Activated CD4-positive, alpha-beta memory T cell treated with anti-CD3 and anti-CD28 coated beads for 36 hours (primary cell): ENCODE measurements at regions of chr17 and their contacts with region 1.

Region 1: GRCh38 chr17:64506576-64507477 is at the start of gene CEP95:
- DNase-seq: peak; percentile 96
- H3K4me3 Mint-ChIP-seq: peak within 1 kb of the TSS; percentile 97
- H3K27ac Mint-ChIP-seq: peak within 1 kb of the TSS; percentile 100
- H3K4me1 Mint-ChIP-seq: peaks cover 48% of the 10 kb centered on the region
- H3K27me3 Mint-ChIP-seq: peaks cover 2% of the 10 kb centered on the region
- total RNA-seq, gene CEP95: 29.9 to 37.8 TPM

Region 2: GRCh38 chr17:63697341-63698286 is 809.2 kb before region 1 on chr17:
- CTCF ChIA-PET with region 1: no interaction called
- POLR2A ChIA-PET with region 1: no interaction called
- intact Hi-C with region 1: loop called (anchors 5 kb)
- DNase-seq: peak; percentile 90
- H3K4me3 Mint-ChIP-seq: peak overlapping the region; percentile 88
- H3K27ac Mint-ChIP-seq: peak overlapping the region; percentile 96
- H3K4me1 Mint-ChIP-seq: peaks cover 53% of the 10 kb centered on the region
- H3K27me3 Mint-ChIP-seq: no peaks in the 10 kb centered on the region

Region 3: GRCh38 chr17:64020056-64020766 is 486.6 kb before region 1 on chr17 and contains the start of gene ICAM2:
- CTCF ChIA-PET with region 1: no interaction called
- POLR2A ChIA-PET with region 1: interaction called, 5 read pairs
- intact Hi-C with region 1: loop called (anchors 1 kb)
- DNase-seq: peak; percentile 95
- H3K4me3 Mint-ChIP-seq: peak within 1 kb of the TSS; percentile 93
- H3K27ac Mint-ChIP-seq: peak within 1 kb of the TSS; percentile 98
- H3K4me1 Mint-ChIP-seq: peaks cover 64% of the 10 kb centered on the region
- H3K27me3 Mint-ChIP-seq: no peaks in the 10 kb centered on the region
- total RNA-seq, gene ICAM2: 65.0 to 66.7 TPM

Region 4: GRCh38 chr17:64491034-64491859 is 15.6 kb before region 1 on chr17:
- CTCF ChIA-PET with region 1: interaction called, 46 read pairs
- POLR2A ChIA-PET with region 1: interaction called, 125 read pairs
- intact Hi-C with region 1: loop called (anchors 2 kb)
- DNase-seq: peak; percentile 70
- H3K4me3 Mint-ChIP-seq: no peak overlapping the region
- H3K27ac Mint-ChIP-seq: no peak overlapping the region
- H3K4me1 Mint-ChIP-seq: peaks cover 34% of the 10 kb centered on the region
- H3K27me3 Mint-ChIP-seq: no peaks in the 10 kb centered on the region

Region 5: DNA sequence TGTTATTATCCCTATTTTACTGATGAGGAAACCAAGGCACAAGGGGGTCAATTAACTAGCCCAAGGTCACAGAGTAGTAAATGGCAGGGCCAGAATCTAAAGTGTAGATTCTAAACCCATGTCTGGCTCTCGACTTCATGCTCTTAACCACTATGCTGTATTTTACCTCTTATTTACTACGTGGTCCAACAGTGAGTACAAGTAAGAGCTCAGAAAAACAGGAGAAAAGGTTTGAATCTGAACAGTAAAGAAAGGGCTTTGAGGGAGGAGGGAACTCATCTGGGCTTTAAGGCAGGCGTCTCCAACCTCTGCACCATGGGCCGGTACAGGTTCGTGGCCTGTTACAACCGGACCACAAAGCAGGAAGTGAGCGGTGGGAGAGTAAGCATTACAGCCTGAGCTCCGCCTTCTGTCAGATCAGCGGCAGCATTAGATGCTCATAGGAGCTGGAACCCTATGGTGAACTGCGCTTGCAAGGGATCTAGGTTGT is 92.4 kb after region 1 on chr17:
- CTCF ChIA-PET with region 1: interaction called, 3 read pairs
- POLR2A ChIA-PET with region 1: interaction called, 11 read pairs
- intact Hi-C with region 1: loop called (anchors 2 kb)
- DNase-seq: peak; percentile 78
- H3K4me3 Mint-ChIP-seq: peak overlapping the region; percentile 61
- H3K27ac Mint-ChIP-seq: peak overlapping the region; percentile 74
- H3K4me1 Mint-ChIP-seq: peaks cover 26% of the 10 kb centered on the region
- H3K27me3 Mint-ChIP-seq: no peaks in the 10 kb centered on the region

Region 6: DNA sequence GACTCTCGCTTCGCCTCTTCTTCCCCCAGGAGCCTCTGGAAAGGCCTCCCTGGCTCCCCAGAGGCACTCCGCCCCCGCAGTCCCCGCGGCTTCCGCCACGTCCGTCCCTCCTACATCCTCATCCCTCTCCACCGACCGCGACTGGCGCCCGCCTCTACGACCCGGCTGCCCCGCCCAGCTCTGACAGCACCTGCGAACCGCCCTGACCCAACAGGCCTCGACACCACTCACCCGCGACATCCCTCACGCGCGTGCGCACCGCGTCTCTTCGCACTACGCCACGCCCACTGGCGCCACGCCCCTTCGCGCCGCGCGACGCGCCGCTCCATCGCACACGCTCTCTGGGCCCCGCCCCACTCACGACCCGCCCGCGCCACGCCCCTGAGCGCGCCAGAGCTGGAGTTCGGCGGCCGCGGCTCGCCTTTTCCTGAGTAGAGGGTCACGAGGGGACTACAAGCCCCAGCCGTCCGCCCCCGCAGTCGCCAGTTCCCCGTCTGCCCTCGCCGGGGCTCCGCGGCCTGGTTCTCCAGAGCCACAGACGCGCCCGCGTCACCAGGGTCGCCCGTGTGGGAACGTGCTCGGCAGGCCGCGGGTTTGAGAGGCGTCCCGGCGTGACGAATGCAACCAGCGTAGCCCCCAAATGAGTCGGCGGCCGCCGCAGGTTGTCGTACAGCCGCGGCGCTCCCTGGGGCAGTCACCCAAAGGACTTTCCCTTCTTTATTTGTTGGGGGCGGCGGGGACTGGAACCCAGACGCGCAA is 468.7 kb after region 1 on chr17:
- CTCF ChIA-PET with region 1: no interaction called
- POLR2A ChIA-PET with region 1: no interaction called
- intact Hi-C with region 1: loop called (anchors 10 kb)
- DNase-seq: peak; percentile 97
- H3K4me3 Mint-ChIP-seq: peak overlapping the region; percentile 82
- H3K27ac Mint-ChIP-seq: peak overlapping the region; percentile 100
- H3K4me1 Mint-ChIP-seq: peaks cover 55% of the 10 kb centered on the region
- H3K27me3 Mint-ChIP-seq: no peaks in the 10 kb centered on the region